A673 (cell line): ENCODE measurements at regions of chr1 and their contacts with region 1.

Region 1: DNA sequence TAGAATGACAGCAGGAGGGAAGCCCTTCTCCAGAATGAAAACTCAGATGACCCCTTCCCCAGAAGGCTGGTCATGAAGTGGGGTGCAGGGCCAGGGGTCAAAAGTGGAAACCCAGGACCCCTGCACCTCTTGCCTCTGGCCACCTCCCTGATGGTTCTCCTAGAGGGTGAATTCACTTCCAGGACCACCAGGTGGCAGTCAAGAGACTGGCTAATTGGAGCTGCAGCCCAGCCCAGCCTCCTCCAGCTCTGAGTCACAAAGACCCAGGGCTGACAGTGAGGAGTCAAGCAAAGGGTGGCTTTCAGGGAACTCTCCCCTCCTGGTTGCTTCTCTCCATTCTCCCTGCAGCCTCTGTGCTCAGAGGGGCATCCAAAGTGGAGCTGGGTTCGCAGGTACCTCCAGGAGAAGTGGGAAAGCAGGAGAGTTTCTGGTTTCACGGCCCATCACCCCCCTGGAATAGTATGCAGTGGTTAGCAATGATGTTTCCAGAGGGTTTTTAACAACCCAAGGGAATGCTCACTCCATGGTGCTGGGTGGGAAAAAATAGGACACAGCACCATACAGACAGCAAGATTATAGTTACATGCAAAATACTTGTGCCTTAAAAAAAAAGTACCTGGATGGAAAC is 6.1 kb upstream of the EPHB2 start:
- DNase-seq: peak; percentile 85
- H3K4me3 ChIP-seq: no peak overlapping the region
- H3K27ac ChIP-seq: no peak overlapping the region
- H3K4me1 ChIP-seq: peaks cover 7% of the 10 kb centered on the region
- H3K27me3 ChIP-seq: no peaks in the 10 kb centered on the region
- CTCF ChIP-seq: peak; percentile 84

Region 2: DNA sequence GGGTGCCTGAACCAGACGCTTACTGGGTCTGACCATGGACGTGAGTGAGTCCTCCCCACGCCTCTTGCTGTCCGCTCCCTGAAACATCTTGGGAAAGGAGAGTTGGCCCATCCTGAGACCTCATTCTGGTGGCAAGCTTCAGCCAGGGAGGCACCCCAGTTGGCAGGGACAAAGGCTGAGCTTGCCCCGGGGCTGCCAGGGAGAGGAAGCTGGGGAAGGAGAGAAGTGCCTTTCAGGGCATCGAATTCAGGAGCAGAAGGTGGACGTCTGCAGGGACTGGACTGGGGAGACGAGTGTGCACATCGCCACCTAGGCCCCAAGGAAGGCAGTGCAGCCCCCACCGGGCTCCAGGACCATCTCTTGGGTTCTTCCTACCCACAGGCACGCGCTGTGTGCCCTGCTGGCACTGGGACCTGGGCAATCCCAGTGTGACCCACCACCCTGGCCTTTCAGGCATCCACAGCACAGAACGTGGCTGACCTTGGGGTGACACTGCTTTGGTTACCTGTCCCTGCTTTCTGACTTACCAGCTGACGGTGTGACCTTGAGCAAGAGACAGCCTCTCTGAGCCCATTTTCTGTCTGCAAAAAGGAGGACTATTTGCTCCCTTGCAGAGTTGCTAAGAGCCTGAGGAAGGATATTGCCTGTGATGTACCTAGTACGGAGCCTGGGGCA is 428.7 kb before region 1 on chr1:
- CTCF ChIA-PET with region 1: no interaction called
- POLR2A ChIA-PET with region 1: no interaction called
- intact Hi-C with region 1: no loop called
- DNase-seq: peak; percentile 55
- H3K4me3 ChIP-seq: no peak overlapping the region
- H3K27ac ChIP-seq: no peak overlapping the region
- H3K4me1 ChIP-seq: no peaks in the 10 kb centered on the region
- H3K27me3 ChIP-seq: no peaks in the 10 kb centered on the region
- CTCF ChIP-seq: peak; percentile 78

Region 3: DNA sequence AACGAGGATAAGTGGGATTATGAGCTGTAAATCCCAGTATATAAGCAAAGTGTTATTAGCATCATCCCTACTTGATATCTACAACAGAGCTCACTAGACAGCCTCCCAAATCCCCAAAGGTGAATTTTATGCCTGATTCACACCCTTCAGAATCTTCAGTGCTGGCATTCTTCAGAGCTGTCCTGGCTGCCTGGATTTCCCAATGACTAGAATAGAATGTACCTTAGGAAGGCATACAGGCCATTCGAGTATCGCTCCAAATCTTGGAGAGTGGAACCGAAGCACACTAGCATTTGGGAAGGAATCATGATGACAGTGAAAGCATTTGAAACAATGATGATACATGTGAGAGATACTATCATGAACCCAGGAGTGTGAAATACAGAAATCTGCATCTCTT is 230.6 kb before region 1 on chr1:
- CTCF ChIA-PET with region 1: no interaction called
- POLR2A ChIA-PET with region 1: no interaction called
- intact Hi-C with region 1: no loop called
- DNase-seq: no peak
- H3K4me3 ChIP-seq: no peak overlapping the region
- H3K27ac ChIP-seq: no peak overlapping the region
- H3K4me1 ChIP-seq: peaks cover 4% of the 10 kb centered on the region
- H3K27me3 ChIP-seq: no peaks in the 10 kb centered on the region
- CTCF ChIP-seq: no peak

Region 4: DNA sequence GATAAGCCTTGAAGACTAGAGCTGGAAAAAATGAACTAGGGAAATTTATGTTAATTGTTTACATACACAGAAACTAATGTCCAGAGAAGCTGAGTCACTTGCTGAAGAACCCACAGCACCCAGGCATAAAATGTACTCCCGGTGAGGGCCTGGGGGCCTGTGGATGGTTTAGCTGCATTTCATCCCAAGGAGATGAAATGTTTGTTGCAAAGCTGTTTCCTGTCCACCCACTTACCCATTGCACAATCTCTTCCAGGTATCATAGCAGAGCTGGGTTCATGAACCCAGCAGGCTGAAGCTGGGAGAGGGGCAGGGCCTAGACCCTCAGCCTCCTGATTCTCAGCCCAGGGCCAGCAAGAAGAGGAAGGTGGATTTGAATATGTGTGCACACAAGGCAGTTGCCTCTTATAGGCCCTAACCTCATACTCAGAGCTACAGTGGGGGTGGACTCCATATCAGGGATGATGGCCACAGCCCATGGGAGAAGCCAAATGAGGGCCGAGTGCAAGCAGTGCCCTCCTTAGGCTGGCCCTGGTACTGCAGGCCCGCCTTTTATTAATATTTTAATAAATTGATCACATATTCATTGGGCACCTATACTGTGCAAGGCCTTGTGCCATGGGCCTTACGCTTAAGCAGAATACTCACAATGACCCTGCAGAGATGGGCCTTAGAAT is 157.3 kb after region 1 on chr1:
- CTCF ChIA-PET with region 1: interaction called, 5 read pairs
- POLR2A ChIA-PET with region 1: no interaction called
- intact Hi-C with region 1: loop called (anchors 10 kb)
- DNase-seq: peak; percentile 46
- H3K4me3 ChIP-seq: no peak overlapping the region
- H3K27ac ChIP-seq: no peak overlapping the region
- H3K4me1 ChIP-seq: no peaks in the 10 kb centered on the region
- H3K27me3 ChIP-seq: no peaks in the 10 kb centered on the region
- CTCF ChIP-seq: peak; percentile 86

Region 5: DNA sequence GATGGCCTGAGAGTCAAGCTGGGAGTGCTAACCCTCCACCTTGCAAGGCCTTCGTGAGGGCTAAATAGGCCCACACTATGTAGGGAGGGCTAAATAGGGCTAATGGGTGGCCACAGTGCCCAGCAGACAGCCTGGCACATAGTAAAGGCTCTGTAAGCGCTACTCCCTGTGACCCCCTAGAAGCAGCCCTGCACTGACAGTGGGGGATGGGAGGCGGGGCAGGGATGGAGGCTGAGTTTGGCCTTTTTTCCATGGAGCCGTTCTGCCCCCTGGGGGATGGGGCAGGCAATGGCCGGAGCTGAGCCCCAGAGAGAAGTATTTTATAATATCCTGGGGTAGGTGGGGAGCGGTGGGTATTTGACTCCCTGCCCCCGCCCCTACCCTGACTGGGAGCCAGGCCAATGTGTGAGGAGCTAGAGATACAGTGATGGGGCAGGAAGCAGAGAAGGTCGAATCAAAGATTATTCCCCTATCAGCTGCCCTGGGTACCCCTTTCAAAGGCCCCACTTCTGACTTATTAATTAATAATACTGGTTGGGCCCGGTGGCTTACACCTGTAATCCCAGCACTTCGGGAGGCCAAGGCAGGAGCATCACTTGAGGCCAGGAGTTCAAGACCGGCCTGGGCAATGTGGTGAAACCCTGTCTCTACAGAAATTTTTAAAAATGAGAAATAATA is 225.8 kb after region 1 on chr1:
- CTCF ChIA-PET with region 1: interaction called, 3 read pairs
- POLR2A ChIA-PET with region 1: no interaction called
- intact Hi-C with region 1: loop called (anchors 1 kb)
- DNase-seq: peak; percentile 74
- H3K4me3 ChIP-seq: no peak overlapping the region
- H3K27ac ChIP-seq: no peak overlapping the region
- H3K4me1 ChIP-seq: no peaks in the 10 kb centered on the region
- H3K27me3 ChIP-seq: no peaks in the 10 kb centered on the region
- CTCF ChIP-seq: peak; percentile 83